ENCODE measurements at regions of chr3 and their contacts with region 1.

Region 1: DNA sequence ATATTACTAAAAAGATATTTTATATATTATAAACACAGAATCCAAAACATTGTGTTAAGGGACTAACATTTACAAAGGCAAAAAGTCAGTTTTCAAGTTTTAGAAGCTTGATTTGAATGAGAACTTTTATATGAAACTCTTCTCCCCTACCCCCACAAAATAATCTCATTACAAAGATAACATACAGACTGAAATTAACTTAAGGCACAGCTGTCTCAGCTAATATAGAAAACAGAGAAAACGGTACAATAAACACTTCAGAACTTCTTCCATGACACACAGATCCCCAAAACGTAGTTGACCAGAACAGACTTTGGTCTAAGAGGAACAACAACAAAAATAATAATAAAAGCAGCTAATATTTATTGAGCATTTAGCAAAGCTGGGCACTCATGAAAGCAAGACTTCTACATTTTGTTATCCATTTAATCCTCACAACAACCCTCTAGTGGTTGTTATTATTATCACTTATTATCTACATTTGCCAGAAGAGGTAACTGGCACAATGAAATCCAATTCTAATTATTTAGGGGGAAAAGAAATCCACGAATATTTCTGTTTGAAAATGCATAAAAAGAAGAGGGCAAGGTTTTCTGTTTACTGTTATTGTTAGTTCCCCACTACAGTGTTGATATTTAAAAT is 68.1 kb downstream of the PFN2 start:
- DNase-seq: peak; percentile 39
- ATAC-seq: no peak; the same call in 1 of the 2 replicates
- H3K4me3 ChIP-seq: no peak overlapping the region
- H3K27ac ChIP-seq: no peak overlapping the region
- H3K4me1 ChIP-seq: no peaks in the 10 kb centered on the region
- H3K27me3 ChIP-seq: no peaks in the 10 kb centered on the region
- CTCF ChIP-seq: peak; percentile 68

Region 2: GRCh38 chr3:149765762-149766334 is 136.8 kb before region 1 on chr3:
- CTCF ChIA-PET with region 1: no interaction called
- POLR2A ChIA-PET with region 1: no interaction called
- intact Hi-C with region 1: loop called (anchors 2 kb)
- DNase-seq: peak; percentile 59
- ATAC-seq: peak; percentile 59
- H3K4me3 ChIP-seq: no peak overlapping the region
- H3K27ac ChIP-seq: no peak overlapping the region
- H3K4me1 ChIP-seq: no peaks in the 10 kb centered on the region
- H3K27me3 ChIP-seq: 0 out of 2 replicates have a peak, but pooled peaks cover 4% of the 10 kb centered on the region
- CTCF ChIP-seq: peak; percentile 74

Region 3: GRCh38 chr3:149783576-149783975 is 119.0 kb before region 1 on chr3:
- CTCF ChIA-PET with region 1: no interaction called
- POLR2A ChIA-PET with region 1: no interaction called
- intact Hi-C with region 1: no loop called
- DNase-seq: peak; percentile 61
- ATAC-seq: peak; percentile 83
- H3K4me3 ChIP-seq: no peak overlapping the region
- H3K27ac ChIP-seq: no peak overlapping the region
- H3K4me1 ChIP-seq: peaks cover 14% of the 10 kb centered on the region
- H3K27me3 ChIP-seq: no peaks in the 10 kb centered on the region
- CTCF ChIP-seq: no peak